PC-9 (cell line): ENCODE measurements at regions of chr3 and their contacts with region 1.

Region 1: DNA sequence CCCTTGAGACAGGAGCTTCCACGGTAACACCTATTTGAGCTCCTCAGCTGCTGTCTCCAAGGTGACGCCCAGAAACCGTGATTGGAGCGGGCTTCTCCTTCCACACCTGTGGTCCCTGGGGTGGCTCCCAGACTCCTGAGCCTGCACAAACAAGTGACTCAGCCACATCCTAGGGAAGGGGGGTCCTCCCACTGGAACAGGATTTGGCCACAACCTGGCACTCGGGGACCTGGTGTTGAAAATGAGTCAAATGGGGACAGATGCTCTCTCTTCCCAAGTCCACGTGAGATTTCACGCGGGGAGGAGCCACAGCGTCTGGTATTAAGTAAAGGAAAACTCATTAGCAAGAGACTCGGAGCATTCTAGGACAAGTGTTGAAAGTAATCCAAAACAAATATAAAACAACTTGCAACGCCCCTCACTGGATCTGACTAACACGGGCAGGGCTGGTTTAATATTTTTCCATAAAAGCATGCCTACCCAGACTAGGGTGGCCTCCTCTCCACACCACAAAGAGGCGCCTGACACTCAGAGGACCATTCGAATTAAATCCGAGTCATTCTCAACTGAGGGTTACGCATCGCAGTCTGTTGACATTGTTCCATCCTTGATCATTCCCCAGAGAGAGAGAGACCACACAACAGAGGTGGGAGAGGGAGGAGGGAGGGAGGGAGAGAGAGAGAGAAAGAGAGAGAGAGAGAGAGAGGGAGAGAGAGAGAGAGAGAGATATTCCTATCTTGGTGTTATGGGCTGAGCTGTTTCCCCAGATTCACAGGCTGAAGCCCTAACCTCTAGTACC is 74.4 kb downstream of the MGLL start:
- DNase-seq: peak; percentile 95 to 97
- H3K4me3 ChIP-seq: 0 out of 2 replicates have a peak overlapping the region, but pooled peaks have one; percentile 6
- H3K27ac ChIP-seq: peak overlapping the region; percentile 91
- H3K4me1 ChIP-seq: peaks cover 73% of the 10 kb centered on the region
- H3K27me3 ChIP-seq: no peaks in the 10 kb centered on the region
- CTCF ChIP-seq: peak; percentile 69

Region 2: DNA sequence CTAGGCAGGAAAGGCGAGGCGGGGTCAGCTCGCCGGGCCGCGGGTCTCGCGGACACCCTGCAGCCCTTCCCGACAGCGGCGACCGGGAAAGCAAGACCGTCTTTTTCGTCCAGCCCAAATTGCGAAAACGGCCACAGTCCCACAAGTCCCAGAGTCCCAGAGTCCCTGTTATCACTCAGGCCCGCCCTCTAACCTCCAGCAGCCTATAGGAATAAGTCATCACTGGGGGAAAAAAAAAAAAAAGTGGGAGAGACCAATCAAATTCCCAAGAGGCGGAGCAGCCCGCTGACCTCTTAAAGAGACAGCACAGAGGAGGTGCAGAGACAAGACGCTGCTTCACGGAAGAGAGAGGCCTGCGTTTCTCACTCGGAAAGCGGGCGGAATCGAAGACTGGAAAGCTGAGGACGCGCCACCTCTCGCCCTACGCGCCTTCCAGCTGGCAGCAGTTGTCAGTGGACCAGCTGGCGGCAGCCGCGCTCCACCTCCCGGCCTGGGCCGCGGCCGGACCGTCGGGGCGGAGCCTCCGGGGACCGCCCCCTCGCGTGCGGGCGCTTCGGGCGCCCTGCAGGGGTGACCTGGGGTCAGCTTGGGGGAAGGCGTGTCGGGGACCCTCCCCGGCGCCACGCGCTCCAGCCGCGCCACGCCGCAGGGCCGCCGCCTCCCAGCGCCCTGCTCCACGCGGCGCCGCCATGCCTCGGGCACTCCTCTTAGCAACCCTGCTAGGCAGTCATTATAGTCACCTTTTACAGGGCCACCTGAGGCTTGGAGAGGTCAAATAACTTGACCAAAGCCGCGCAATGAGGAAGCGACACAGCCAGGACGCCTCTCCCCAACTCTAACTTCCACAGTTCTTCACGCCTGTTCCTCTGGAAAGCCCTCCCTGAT is 157.1 kb before region 1 on chr3 and contains the start of gene TPRA1:
- CTCF ChIA-PET with region 1: no interaction called
- POLR2A ChIA-PET with region 1: no interaction called
- intact Hi-C with region 1: loop called (anchors 2 kb)
- DNase-seq: peak; percentile 94 to 96
- H3K4me3 ChIP-seq: peak within 1 kb of the TSS; percentile 70
- H3K27ac ChIP-seq: peak within 1 kb of the TSS; percentile 92
- H3K4me1 ChIP-seq: peaks cover 22% of the 10 kb centered on the region
- H3K27me3 ChIP-seq: no peaks in the 10 kb centered on the region
- CTCF ChIP-seq: no peak
- total RNA-seq, gene TPRA1: 58.5 and 66.5 TPM in 2 replicates

Region 3: GRCh38 chr3:127690823-127691452 is 57.0 kb before region 1 on chr3:
- CTCF ChIA-PET with region 1: interaction called, 4 read pairs
- POLR2A ChIA-PET with region 1: interaction called, 3 read pairs
- intact Hi-C with region 1: loop called (anchors 1 kb)
- DNase-seq: peak; percentile 41 to 70
- H3K4me3 ChIP-seq: no peak overlapping the region
- H3K27ac ChIP-seq: peak overlapping the region; percentile 94
- H3K4me1 ChIP-seq: peaks cover 23% of the 10 kb centered on the region
- H3K27me3 ChIP-seq: no peaks in the 10 kb centered on the region
- CTCF ChIP-seq: peak; percentile 67

Region 4: DNA sequence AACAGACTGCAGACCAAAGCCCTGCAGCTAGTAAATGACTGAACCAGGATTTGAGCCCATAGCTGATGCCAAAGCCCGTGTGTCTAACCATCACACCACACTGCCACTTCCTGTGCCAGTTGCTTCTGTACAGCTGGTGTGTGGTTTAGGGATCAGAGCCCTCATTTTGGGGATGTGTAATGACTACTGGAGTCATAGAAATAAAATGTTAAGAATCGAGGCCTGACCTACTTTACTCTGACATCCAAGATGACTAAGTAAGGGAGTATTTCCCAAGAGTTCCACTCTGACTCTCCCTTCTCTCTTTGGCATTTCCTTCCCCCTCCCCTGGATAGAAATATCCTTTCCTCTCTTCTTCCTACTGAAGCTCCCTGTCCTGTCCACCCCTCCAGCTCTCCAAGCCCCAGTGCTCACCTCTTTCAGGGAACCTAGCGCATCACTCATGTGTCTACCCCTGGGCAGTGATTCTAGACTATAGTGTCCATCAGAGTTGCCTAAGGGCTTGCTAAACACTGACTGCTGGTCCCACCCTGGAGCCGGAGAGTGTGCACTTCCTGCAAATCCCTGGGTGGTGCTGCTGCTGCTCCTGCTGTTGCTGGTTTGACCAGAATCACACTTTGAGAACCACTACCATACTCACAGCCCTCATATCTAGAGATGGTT is 20.6 kb after region 1 on chr3:
- CTCF ChIA-PET with region 1: interaction called, 3 read pairs
- POLR2A ChIA-PET with region 1: interaction called, 4 read pairs
- intact Hi-C with region 1: loop called (anchors 1 kb)
- DNase-seq: peak; percentile 65 to 92
- H3K4me3 ChIP-seq: no peak overlapping the region
- H3K27ac ChIP-seq: peak overlapping the region; percentile 71
- H3K4me1 ChIP-seq: peaks cover 36% of the 10 kb centered on the region
- H3K27me3 ChIP-seq: no peaks in the 10 kb centered on the region
- CTCF ChIP-seq: no peak

Region 5: DNA sequence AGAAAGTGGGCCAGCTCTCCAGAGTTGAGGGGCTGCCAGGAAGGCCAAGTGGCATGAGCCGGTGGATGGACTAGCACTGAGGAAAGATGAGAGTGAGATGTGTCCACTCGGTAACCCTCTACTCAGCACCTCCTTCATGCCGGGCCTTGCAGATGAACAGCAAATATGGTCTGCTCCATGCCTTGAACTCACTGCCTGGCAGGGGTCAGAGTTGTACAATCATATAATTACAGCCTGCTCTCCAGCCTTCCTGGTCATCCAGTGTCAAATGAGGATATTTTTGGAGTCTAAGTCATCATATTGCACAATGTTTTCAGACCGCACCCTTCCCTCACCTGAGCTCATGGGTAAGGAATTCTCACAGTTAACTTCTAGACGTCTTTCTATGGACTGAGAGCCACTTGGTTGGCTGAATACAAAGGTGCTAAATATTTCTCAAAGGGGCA is 69.5 kb after region 1 on chr3:
- CTCF ChIA-PET with region 1: no interaction called
- POLR2A ChIA-PET with region 1: interaction called, 7 read pairs
- intact Hi-C with region 1: loop called (anchors 1 kb)
- DNase-seq: peak; percentile 78 to 98
- H3K4me3 ChIP-seq: peak overlapping the region; percentile 16; the same call in 1 of the 2 replicates
- H3K27ac ChIP-seq: peak overlapping the region; percentile 93
- H3K4me1 ChIP-seq: peaks cover 79% of the 10 kb centered on the region
- H3K27me3 ChIP-seq: no peaks in the 10 kb centered on the region
- CTCF ChIP-seq: peak; percentile 26; the same call in 1 of the 2 replicates

Region 6: GRCh38 chr3:127959846-127960245 is 211.9 kb after region 1 on chr3:
- CTCF ChIA-PET with region 1: interaction called, 3 read pairs
- POLR2A ChIA-PET with region 1: no interaction called
- intact Hi-C with region 1: loop called (anchors 1 kb)
- DNase-seq: peak; percentile 69 to 85
- H3K4me3 ChIP-seq: no peak overlapping the region
- H3K27ac ChIP-seq: no peak overlapping the region
- H3K4me1 ChIP-seq: peaks cover 34% of the 10 kb centered on the region
- H3K27me3 ChIP-seq: no peaks in the 10 kb centered on the region
- CTCF ChIP-seq: peak; percentile 63